Activated naive CD4-positive, alpha-beta T cell treated with anti-CD3 and anti-CD28 coated beads for 36 hours (primary cell): ENCODE measurements at regions of chr7 and their contacts with region 1.

Region 1: GRCh38 chr7:115299397-115300037 is 377.6 kb downstream of the MDFIC start:
- DNase-seq: no peak
- H3K4me3 Mint-ChIP-seq: no peak overlapping the region
- H3K27ac Mint-ChIP-seq: no peak overlapping the region
- H3K4me1 Mint-ChIP-seq: no peaks in the 10 kb centered on the region
- H3K27me3 Mint-ChIP-seq: no peaks in the 10 kb centered on the region

Region 2: GRCh38 chr7:115217373-115217772 is 82.1 kb before region 1 on chr7:
- CTCF ChIA-PET with region 1: no interaction called
- intact Hi-C with region 1: no loop called
- DNase-seq: no peak
- H3K4me3 Mint-ChIP-seq: no peak overlapping the region
- H3K27ac Mint-ChIP-seq: no peak overlapping the region
- H3K4me1 Mint-ChIP-seq: peaks cover 10% of the 10 kb centered on the region
- H3K27me3 Mint-ChIP-seq: no peaks in the 10 kb centered on the region

Region 3: DNA sequence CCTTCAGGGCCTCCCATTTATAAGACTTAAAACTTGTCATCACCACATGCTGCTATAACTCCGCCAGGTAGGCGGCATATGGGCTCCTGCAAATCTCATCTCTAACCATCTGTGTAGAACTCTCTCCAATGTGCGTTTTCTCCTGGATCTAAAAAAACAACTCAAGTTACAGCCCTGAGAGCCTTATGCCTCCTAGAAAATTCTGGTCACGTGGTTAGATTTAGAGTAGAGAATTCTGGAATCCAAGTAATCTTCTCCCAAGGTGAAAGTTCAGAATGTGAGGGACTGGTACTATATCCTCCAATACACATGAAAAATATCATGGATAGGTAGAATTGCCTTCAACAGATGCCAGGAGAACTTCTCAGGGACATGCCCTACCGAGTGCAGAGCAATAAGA is 39.4 kb after region 1 on chr7:
- CTCF ChIA-PET with region 1: no interaction called
- intact Hi-C with region 1: loop called (anchors 1 kb)
- DNase-seq: no peak
- H3K4me3 Mint-ChIP-seq: no peak overlapping the region
- H3K27ac Mint-ChIP-seq: no peak overlapping the region
- H3K4me1 Mint-ChIP-seq: peaks cover 6% of the 10 kb centered on the region
- H3K27me3 Mint-ChIP-seq: no peaks in the 10 kb centered on the region